ENCODE measurements at regions of chr9 and their contacts with region 1.

Region 1: DNA sequence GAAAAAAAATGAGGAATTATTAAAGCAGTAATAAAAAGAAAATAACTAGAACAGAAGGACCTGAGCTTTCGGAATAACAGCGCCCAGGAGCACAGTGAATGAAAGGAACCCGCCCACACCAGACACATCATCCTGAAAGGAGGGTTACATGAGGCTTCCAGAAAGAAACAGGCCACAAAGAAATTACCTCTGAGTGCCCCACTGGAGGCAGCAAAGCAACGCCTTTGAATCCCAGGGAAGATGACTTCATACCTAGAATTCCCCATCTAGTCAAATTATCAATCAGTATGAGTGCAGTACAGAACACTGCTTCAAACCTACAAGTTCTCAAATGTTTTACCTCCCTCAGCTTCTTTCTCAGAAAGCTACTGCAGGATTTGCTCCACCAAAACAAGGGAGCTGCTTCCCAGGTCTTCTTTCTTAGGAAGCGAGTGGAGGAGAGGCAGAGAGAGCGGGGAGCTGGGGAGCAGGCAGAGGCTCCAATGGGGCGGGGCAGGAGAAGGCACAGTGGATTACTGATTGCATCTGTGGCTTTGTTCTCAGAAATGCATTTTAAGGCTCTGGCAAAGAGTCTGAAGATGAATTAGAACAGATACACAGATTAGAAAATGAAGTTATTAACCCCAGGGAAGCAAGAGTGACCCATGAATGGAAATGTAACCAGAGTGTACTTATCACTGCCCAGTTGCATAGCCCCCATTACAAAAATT is 87.1 kb downstream of the SEMA4D start:
- DNase-seq: peak; percentile 85
- ATAC-seq: peak; percentile 81
- H3K4me3 Mint-ChIP-seq: peak overlapping the region; percentile 50
- H3K27ac Mint-ChIP-seq: peak overlapping the region; percentile 92
- H3K4me1 Mint-ChIP-seq: peaks cover 90% of the 10 kb centered on the region
- H3K27me3 Mint-ChIP-seq: no peaks in the 10 kb centered on the region

Region 2: GRCh38 chr9:89179895-89180667 is 230.7 kb before region 1 on chr9:
- CTCF ChIA-PET with region 1: no interaction called
- POLR2A ChIA-PET with region 1: no interaction called
- intact Hi-C with region 1: no loop called
- DNase-seq: peak; percentile 84
- ATAC-seq: peak; percentile 90
- H3K4me3 Mint-ChIP-seq: peak overlapping the region; percentile 55
- H3K27ac Mint-ChIP-seq: peak overlapping the region; percentile 1
- H3K4me1 Mint-ChIP-seq: peaks cover 24% of the 10 kb centered on the region
- H3K27me3 Mint-ChIP-seq: peaks cover 46% of the 10 kb centered on the region

Region 3: DNA sequence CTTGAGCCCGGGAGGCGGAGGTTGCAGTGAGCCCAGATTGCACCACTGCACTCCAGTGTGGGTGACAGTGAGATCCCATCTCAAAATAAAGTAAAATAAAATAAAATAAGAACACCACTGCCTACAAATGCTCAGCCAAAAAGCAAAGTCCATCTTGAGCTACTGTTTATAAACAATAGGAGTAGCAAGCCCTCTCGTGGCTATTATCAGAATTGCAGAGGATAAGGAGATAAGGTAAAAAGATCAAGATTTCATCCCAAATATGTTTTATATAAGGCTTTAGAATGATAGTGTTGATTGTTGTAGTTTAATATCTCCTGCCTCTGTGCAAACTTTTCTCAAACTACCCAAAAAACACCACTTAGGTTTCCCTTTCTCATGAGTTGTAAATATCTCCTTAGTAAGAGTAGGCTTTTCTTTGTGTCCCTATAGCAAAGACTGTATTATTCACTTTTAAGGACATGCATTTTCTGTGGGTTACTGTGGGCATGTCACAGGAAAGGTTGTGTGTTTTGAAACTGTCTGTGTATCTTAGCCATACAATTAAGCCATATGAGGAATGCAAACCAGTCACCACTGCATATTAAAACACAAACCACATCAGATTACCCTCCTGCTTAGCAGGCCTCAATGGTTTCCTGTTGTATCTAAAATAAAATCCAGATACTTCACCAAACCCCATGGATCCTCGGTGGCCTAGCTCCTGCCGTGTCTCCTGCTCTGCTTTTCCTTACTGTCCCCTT is 131.6 kb before region 1 on chr9:
- CTCF ChIA-PET with region 1: no interaction called
- POLR2A ChIA-PET with region 1: no interaction called
- intact Hi-C with region 1: no loop called
- DNase-seq: peak; percentile 22
- ATAC-seq: peak; percentile 28
- H3K4me3 Mint-ChIP-seq: no peak overlapping the region
- H3K27ac Mint-ChIP-seq: no peak overlapping the region
- H3K4me1 Mint-ChIP-seq: peaks cover 35% of the 10 kb centered on the region
- H3K27me3 Mint-ChIP-seq: no peaks in the 10 kb centered on the region

Region 4: GRCh38 chr9:89466451-89467277 is 55.9 kb after region 1 on chr9:
- CTCF ChIA-PET with region 1: interaction called, 5 read pairs
- POLR2A ChIA-PET with region 1: interaction called, 5 read pairs
- intact Hi-C with region 1: loop called (anchors 1 kb)
- DNase-seq: peak; percentile 80
- ATAC-seq: peak; percentile 73
- H3K4me3 Mint-ChIP-seq: peak overlapping the region; percentile 62
- H3K27ac Mint-ChIP-seq: peak overlapping the region; percentile 95
- H3K4me1 Mint-ChIP-seq: peaks cover 96% of the 10 kb centered on the region
- H3K27me3 Mint-ChIP-seq: no peaks in the 10 kb centered on the region

Region 5: DNA sequence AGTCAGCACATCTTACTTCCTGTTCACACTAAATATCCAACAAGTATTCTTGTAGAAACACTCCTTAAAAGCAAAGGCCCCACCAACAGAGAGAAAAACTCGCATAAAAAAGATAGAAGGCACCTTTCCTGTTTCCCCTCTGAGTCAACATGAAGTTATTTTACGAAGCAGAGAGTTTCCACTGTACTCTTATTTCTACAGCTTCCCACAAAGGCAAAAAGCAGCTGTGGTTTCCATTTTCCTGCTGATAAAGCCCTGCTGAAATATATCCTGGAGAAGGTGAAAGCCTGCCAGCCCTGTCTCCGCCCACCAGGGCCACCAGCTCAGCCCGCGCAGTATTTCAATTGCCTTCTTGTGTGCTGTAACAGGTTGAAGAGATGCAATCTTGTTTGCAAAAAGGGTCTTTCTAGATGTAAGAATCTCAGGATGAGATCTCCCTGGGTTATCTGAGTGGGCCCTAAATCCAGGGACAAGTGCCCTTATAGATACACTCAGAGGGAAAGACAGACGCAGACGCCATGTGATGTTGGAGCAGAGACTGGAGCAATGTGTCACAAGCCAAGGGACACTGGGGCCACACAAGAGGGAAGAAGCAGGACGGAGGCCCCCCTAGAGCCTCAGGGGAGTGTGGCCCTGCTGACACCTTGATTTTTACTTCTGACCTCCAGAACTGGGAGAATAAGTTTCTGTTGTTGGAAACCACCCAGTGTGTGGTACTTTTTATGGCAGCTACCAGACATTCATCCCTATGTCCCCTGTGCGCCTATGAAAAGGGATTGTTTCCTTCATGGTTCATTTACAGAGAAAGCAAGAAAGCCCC is 67.2 kb after region 1 on chr9:
- CTCF ChIA-PET with region 1: interaction called, 3 read pairs
- POLR2A ChIA-PET with region 1: interaction called, 15 read pairs
- intact Hi-C with region 1: loop called (anchors 1 to 2 kb)
- DNase-seq: peak; percentile 79
- ATAC-seq: peak; percentile 43
- H3K4me3 Mint-ChIP-seq: peak overlapping the region; percentile 92
- H3K27ac Mint-ChIP-seq: peak overlapping the region; percentile 99
- H3K4me1 Mint-ChIP-seq: peaks cover 94% of the 10 kb centered on the region
- H3K27me3 Mint-ChIP-seq: no peaks in the 10 kb centered on the region

Region 6: GRCh38 chr9:89483592-89484522 is 73.1 kb after region 1 on chr9:
- CTCF ChIA-PET with region 1: interaction called, 6 read pairs
- POLR2A ChIA-PET with region 1: interaction called, 15 read pairs
- intact Hi-C with region 1: loop called in 1 of 2 experiments (anchors 2 kb)
- DNase-seq: peak; percentile 79
- ATAC-seq: peak; percentile 57
- H3K4me3 Mint-ChIP-seq: peak overlapping the region; percentile 79
- H3K27ac Mint-ChIP-seq: peak overlapping the region; percentile 93
- H3K4me1 Mint-ChIP-seq: peaks cover 91% of the 10 kb centered on the region
- H3K27me3 Mint-ChIP-seq: no peaks in the 10 kb centered on the region

Region 7: DNA sequence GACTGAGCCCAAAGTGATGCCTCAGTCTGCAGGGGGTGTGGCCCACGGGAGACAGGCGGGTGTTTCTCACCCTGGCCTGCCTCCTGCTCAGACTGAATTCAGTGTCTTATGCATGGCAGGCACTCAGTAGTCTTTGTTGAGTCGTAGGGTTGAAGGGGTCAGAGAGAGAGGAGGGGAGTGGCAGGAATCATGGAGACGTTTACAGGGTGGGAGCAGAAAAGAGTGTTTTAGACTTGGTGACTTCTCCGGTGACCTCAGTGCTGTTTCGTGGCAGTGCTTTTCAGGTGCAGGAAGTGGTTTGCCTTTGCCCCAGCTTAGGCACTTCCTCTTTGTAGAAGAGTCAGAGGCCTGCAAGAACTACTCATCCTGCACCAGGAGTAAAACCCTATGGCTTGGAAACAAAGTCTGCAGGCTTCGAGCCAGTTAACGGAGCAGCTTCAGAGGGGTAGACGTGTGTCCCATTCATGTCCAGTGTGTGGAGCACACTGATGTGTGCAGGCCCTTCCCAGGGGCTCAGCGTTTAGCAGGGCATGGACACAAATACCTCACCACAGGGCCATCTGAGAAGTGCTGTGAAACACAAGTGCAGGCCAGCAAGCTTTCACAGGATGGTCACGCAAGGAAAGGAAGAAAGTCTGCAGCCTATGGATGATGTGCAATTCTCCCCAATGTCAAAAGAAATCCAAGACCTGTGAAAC is 111.6 kb after region 1 on chr9:
- CTCF ChIA-PET with region 1: interaction called, 3 read pairs
- POLR2A ChIA-PET with region 1: interaction called, 6 read pairs
- intact Hi-C with region 1: loop called in 1 of 2 experiments (anchors 1 kb)
- DNase-seq: peak; percentile 86
- ATAC-seq: peak; percentile 90
- H3K4me3 Mint-ChIP-seq: peak overlapping the region; percentile 62
- H3K27ac Mint-ChIP-seq: peak overlapping the region; percentile 97
- H3K4me1 Mint-ChIP-seq: peaks cover 94% of the 10 kb centered on the region
- H3K27me3 Mint-ChIP-seq: no peaks in the 10 kb centered on the region

Region 8: DNA sequence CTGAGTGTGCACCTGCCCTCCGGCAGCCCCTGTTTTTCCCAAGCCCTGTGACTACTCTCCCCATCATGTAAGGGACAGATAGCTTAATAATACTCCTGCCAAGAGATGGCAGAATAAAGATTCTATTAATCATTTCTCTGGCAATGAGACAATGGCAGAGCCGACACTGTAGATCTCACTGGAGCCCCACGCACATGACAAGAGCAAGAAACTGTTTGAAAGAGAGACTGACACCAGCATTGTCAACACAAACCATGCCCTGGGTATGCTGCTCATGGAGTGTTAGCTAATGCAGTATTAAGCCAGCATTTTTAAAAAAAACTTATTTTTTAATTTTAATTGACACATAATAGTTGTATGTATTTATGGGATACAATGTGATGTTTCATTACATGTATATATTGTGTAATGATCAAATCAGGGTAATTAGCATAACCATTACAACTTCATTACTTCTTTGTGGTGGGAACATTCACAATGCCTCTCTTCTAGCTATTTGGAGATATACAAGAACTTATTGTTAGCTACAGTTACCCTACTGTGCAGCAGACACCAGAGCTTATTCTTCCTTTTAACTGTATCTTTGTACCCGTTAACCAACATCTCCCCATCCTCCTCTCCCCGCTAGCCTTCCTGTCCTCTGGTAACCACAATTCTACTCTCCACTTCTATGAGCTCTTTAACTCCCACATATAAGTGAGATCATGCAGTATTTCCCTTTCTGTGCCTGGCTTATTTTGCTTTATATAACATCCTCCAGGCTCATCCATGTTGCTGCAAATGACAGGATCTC is 118.6 kb after region 1 on chr9:
- CTCF ChIA-PET with region 1: interaction called, 12 read pairs
- POLR2A ChIA-PET with region 1: interaction called, 4 read pairs
- intact Hi-C with region 1: no loop called
- DNase-seq: no peak
- ATAC-seq: peak; percentile 31
- H3K4me3 Mint-ChIP-seq: peak overlapping the region; percentile 37
- H3K27ac Mint-ChIP-seq: peak overlapping the region; percentile 68
- H3K4me1 Mint-ChIP-seq: peaks cover 95% of the 10 kb centered on the region
- H3K27me3 Mint-ChIP-seq: no peaks in the 10 kb centered on the region

Region 9: DNA sequence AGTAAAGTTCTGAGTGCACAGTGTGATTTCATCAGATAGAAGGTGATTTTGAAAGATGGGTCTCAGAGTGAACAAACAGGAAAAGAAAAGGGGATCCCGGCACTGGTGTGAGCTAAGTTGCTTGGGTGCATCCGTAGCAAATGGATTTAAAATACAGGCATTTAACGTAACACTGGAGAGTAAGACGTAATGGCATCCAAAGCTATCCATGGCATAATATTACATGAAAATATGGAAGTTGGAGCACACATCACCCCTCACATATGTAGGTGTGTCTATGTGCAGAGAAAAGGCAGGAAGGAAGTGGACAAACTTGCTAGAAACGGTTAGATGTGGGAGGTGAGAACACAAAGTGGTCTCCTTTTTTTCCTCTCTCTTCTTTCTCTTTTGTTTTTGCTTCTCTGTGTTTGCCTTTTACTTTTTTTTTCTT is 125.4 kb after region 1 on chr9:
- CTCF ChIA-PET with region 1: interaction called, 12 read pairs
- POLR2A ChIA-PET with region 1: interaction called, 4 read pairs
- intact Hi-C with region 1: loop called in 1 of 2 experiments (anchors 1 kb)
- DNase-seq: no peak
- ATAC-seq: peak; percentile 68
- H3K4me3 Mint-ChIP-seq: peak overlapping the region; percentile 57
- H3K27ac Mint-ChIP-seq: peak overlapping the region; percentile 97
- H3K4me1 Mint-ChIP-seq: peaks cover 88% of the 10 kb centered on the region
- H3K27me3 Mint-ChIP-seq: no peaks in the 10 kb centered on the region